Transverse colon (tissue), 4 donors: ENCODE measurements at regions of chr1 and their contacts with region 1.

Region 1: GRCh38 chr1:231478800-231479199 is 49.7 kb upstream of the TSNAX start:
- DNase-seq: no peak
- H3K4me3 ChIP-seq: no peak overlapping the region
- H3K27ac ChIP-seq: no peak overlapping the region
- H3K4me1 ChIP-seq: no peaks in the 10 kb centered on the region
- H3K27me3 ChIP-seq: peaks cover 6% of the 10 kb centered on the region
- CTCF ChIP-seq: no peak
- EP300 ChIP-seq: no peak
- POLR2A ChIP-seq: no peak

Region 2: GRCh38 chr1:229539863-229540506 is 1938.8 kb before region 1 on chr1:
- in situ Hi-C with region 1: no loop called
- intact Hi-C with region 1: loop called (anchors 10 kb)
- DNase-seq: no peak
- H3K4me3 ChIP-seq: no peak overlapping the region
- H3K27ac ChIP-seq: no peak overlapping the region
- H3K4me1 ChIP-seq: no peaks in the 10 kb centered on the region
- H3K27me3 ChIP-seq: no peaks in the 10 kb centered on the region
- CTCF ChIP-seq: no peak
- EP300 ChIP-seq: no peak
- POLR2A ChIP-seq: no peak